K562 (cell line): ENCODE measurements at regions of chr6 and their contacts with region 1.

Region 1: GRCh38 chr6:36340618-36341454 is 4.1 kb upstream of the BNIP5 start:
- DNase-seq: peak; percentile 84 to 89 (median 86)
- ATAC-seq: peak; percentile 93
- H3K4me3 ChIP-seq: peak overlapping the region; percentile 15; the same call in 1 of the 2 replicates
- H3K27ac ChIP-seq: no peak overlapping the region
- H3K4me1 ChIP-seq: peaks cover 7 to 12% of the 10 kb centered on the region in 2 experiments; a peak in 4 of 5 replicates
- H3K27me3 ChIP-seq: peaks cover 13 to 40% of the 10 kb centered on the region in 2 experiments; a peak in 4 of 5 replicates
- CTCF ChIP-seq: peak; percentile 96 to 99 (median 97)
- EP300 ChIP-seq: no peak
- POLR2A ChIP-seq: no peak
- RAD21 ChIP-seq: peak; percentile 84 to 86

Region 2: DNA sequence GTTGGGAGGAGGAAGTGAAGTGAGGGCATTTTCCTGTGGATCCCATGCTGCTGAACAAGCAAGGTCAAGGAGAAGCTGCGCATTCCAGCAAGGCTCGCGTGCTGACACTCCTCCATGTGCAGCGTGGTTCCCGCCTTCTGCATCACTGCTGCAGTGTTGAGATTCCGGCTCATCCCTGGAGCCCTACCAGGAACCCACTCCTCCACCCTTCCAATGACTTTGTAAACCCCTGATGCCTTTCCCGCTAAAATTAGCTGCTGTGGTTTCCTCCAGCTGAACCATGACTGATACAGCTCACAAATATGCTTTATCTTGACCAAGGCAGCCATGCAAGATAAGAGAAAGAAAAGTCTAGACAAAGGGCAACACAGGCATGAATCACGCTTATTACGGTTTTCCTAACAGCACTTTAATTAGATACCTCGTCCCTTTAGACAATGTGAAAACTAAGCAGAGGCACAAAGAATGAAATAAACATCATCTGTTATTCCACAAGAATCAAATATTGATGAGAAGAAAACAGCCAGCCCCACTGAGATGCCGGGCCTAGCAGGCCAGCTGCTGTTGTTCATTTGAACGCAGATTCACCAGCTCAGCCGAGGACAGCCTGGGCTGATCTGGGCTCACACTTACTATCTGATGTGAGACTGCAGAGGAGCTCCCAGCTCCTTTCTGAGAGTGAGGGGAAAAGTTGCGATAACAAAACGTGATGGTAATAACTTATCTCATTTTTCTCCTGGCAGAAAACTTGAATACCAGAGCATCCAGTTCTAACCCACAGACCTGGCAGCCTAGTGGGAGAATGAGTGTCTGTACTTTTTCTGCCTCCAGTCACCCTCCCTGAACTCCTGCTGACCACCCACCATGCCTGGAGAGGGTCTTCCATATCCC is 10.1 kb after region 1 on chr6:
- CTCF ChIA-PET with region 1: no interaction called
- POLR2A ChIA-PET with region 1: interaction called, 20 read pairs
- in situ Hi-C with region 1: no loop called
- intact Hi-C with region 1: no loop called
- DNase-seq: peak; percentile 67 to 88 (median 73)
- ATAC-seq: peak; percentile 72
- H3K4me3 ChIP-seq: no peak overlapping the region
- H3K27ac ChIP-seq: no peak overlapping the region
- H3K4me1 ChIP-seq: peaks cover 27 to 33% of the 10 kb centered on the region in 2 experiments
- H3K27me3 ChIP-seq: no peaks in the 10 kb centered on the region
- CTCF ChIP-seq: no peak
- EP300 ChIP-seq: peak; percentile 92
- POLR2A ChIP-seq: no peak
- RAD21 ChIP-seq: peak; percentile 5 to 14; a peak in 1 of 4 replicates